HEK293T (cell line): ENCODE measurements at regions of chr2 and their contacts with region 1.

Region 1: GRCh38 chr2:12931186-12931844 is 214.6 kb downstream of the TRIB2 start:
- DNase-seq: peak; percentile 26

Region 2: GRCh38 chr2:12716282-12717190 is 214.8 kb before region 1 on chr2 and contains the start of gene TRIB2:
- CTCF ChIA-PET with region 1: interaction called, 14 read pairs
- POLR2A ChIA-PET with region 1: interaction called, 4 read pairs
- DNase-seq: peak; percentile 73

Region 3: DNA sequence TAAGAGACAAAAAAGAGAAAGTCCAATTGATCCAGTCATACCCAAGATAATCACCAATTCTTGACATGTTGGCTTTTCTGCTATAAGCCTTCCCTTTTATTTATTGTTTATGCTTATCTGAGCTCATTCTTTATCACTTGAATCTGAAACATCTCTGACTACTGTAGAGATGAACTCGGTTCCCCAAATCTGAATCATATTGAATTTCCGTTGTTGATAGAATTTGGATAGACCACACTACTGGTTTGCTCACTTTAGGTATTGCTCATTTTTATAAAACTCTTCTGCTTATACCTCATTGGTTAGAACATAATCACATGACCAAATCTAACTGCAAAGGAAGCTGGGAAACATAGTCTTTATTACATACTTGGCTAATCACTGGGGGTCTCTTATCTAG is 22.3 kb after region 1 on chr2:
- CTCF ChIA-PET with region 1: interaction called, 10 read pairs
- POLR2A ChIA-PET with region 1: no interaction called
- DNase-seq: no peak